ENCODE measurements at regions of chr15 and their contacts with region 1.

Region 1: GRCh38 chr15:75008629-75009326 is 13.4 kb downstream of the SCAMP5 start:
- DNase-seq: peak in 2 of 3 donors; percentile 73 to 80
- H3K4me3 ChIP-seq: peak overlapping the region in 5 of 7 experiments; percentile 20 to 66 (median 36)
- H3K27ac ChIP-seq: no peak overlapping the region
- H3K4me1 ChIP-seq: peaks cover 13 to 47% (median 24%) of the 10 kb centered on the region in 4 experiments
- H3K27me3 ChIP-seq: no peaks in the 10 kb centered on the region

Region 2: GRCh38 chr15:74995241-74995778 is 13.5 kb before region 1 on chr15 and contains the start of gene SCAMP5:
- CTCF ChIA-PET with region 1: interaction called, 11 read pairs
- POLR2A ChIA-PET with region 1: interaction called, 3 read pairs
- DNase-seq: peak; percentile 93 to 97 (median 96)
- H3K4me3 ChIP-seq: peak within 1 kb of the TSS; percentile 59 to 89 (median 77)
- H3K27ac ChIP-seq: peak within 1 kb of the TSS in 1 of 2 experiments; percentile 34
- H3K4me1 ChIP-seq: peaks cover 0 to 20% (median 18%) of the 10 kb centered on the region in 4 experiments
- H3K27me3 ChIP-seq: peaks cover 0 to 5% (median 3%) of the 10 kb centered on the region in 5 experiments

Measured in common myeloid progenitor, CD34-positive (primary cell).